CD4-positive, alpha-beta memory T cell (primary cell): ENCODE measurements at regions of chr12 and their contacts with region 1.

Region 1: DNA sequence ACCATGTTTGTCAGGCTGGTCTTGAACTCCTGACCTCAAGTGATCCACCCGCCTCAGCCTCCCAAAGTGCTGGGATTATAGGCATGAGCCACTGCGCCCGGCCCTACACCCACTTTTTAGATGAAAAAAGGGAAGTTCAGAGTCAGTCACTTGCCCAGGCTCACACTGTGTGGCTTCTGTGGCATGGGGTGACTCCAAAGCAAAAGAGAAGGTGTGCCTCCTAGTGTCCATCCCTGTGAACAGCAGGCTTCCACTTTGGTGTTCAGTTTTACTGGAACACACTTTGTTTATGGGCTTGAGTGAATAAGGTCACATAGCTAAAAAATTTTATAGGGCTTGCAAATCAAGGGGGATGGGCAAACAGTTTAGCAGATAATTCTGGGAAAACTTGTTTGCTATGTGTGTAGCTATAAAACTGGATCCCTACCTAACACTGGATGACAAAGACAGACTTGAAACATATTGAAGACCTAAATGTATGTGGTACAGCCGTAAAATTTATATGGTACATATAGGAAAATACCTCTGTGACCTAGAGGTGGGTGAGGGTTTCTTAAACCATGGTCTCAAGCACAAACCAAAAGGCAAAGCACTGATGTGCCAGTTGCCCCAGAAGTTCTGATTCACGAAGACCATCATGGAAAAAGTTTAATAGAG is 54.9 kb downstream of the EID3 start:
- DNase-seq: peak; percentile 65 to 69 (median 68)
- H3K4me3 ChIP-seq: no peak overlapping the region
- H3K4me3 Mint-ChIP-seq: no peak overlapping the region
- H3K27ac ChIP-seq: no peak overlapping the region
- H3K27ac Mint-ChIP-seq: no peak overlapping the region
- H3K4me1 ChIP-seq: no peaks in the 10 kb centered on the region
- H3K4me1 Mint-ChIP-seq: peaks cover 0 to 5% (median 2%) of the 10 kb centered on the region in 4 donors
- H3K27me3 ChIP-seq: no peaks in the 10 kb centered on the region
- H3K27me3 Mint-ChIP-seq: no peaks in the 10 kb centered on the region

Region 2: DNA sequence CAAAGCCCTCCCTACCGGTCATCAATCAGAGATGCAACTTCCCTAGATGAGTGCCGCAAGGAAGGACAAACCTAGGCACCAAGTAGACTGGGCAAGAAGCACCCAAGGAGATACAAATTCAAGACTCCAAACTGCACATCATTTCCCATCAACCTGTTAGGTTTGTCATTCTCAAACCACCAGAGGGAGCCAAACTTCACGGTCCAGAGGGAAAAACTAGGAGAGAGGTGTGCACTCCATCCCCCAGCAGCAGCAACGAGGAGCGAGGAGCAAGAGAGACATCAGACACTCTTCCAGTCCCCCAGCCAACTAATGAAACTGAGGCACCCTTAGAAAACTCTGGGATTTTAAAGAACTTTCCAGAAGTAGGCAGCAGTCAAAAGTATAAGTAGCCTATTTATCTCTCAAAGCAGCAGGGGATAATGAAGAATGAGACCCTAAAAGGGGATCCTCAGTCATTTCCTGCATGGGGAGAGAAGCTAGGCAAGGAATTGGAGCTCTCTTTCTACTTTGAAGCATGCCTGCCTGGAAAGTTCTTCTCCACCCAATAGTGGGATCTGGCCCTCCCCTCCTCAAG is 480.5 kb before region 1 on chr12:
- CTCF ChIA-PET with region 1: no interaction called
- POLR2A ChIA-PET with region 1: no interaction called
- intact Hi-C with region 1: loop called (anchors 10 kb)
- DNase-seq: peak; percentile 51 to 61 (median 60)
- H3K4me3 ChIP-seq: no peak overlapping the region
- H3K4me3 Mint-ChIP-seq: peak overlapping the region in 3 of 8 donors; percentile 8 to 62 (median 20)
- H3K27ac ChIP-seq: no peak overlapping the region
- H3K27ac Mint-ChIP-seq: peak overlapping the region in 3 of 7 donors; percentile 23 to 77 (median 76)
- H3K4me1 ChIP-seq: peaks cover 7% of the 10 kb centered on the region
- H3K4me1 Mint-ChIP-seq: peaks cover 3 to 27% (median 14%) of the 10 kb centered on the region in 4 donors
- H3K27me3 ChIP-seq: no peaks in the 10 kb centered on the region
- H3K27me3 Mint-ChIP-seq: no peaks in the 10 kb centered on the region

Region 3: DNA sequence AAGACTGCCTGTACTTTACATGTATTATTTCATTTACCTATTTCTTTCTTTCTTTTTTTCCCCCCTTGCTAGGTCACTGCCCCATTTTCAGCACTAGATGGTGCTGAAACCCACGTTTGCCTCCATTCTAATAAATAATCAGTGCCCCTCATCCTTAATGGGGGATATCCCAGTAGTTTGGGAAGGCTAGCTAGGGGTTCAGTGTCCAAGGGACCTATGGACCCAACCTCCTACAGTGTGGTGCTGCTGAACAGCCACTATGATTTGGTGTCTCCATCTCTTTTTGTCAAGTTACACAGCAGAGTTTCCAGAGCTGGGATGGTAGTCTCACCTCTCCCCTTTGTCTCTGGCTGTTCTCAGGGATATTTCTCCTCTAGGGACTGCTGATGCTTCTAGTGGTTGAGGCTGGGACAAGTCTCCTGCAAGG is 300.7 kb before region 1 on chr12:
- CTCF ChIA-PET with region 1: no interaction called
- POLR2A ChIA-PET with region 1: no interaction called
- intact Hi-C with region 1: loop called (anchors 10 kb)
- DNase-seq: peak in 4 of 5 donors; percentile 7 to 28 (median 22)
- H3K4me3 ChIP-seq: no peak overlapping the region
- H3K4me3 Mint-ChIP-seq: no peak overlapping the region
- H3K27ac ChIP-seq: no peak overlapping the region
- H3K27ac Mint-ChIP-seq: peak overlapping the region in 1 of 7 donors; percentile 27
- H3K4me1 ChIP-seq: no peaks in the 10 kb centered on the region
- H3K4me1 Mint-ChIP-seq: no peaks in the 10 kb centered on the region
- H3K27me3 ChIP-seq: peaks cover 9% of the 10 kb centered on the region
- H3K27me3 Mint-ChIP-seq: peaks cover 9 to 23% of the 10 kb centered on the region in 2 donors

Region 4: DNA sequence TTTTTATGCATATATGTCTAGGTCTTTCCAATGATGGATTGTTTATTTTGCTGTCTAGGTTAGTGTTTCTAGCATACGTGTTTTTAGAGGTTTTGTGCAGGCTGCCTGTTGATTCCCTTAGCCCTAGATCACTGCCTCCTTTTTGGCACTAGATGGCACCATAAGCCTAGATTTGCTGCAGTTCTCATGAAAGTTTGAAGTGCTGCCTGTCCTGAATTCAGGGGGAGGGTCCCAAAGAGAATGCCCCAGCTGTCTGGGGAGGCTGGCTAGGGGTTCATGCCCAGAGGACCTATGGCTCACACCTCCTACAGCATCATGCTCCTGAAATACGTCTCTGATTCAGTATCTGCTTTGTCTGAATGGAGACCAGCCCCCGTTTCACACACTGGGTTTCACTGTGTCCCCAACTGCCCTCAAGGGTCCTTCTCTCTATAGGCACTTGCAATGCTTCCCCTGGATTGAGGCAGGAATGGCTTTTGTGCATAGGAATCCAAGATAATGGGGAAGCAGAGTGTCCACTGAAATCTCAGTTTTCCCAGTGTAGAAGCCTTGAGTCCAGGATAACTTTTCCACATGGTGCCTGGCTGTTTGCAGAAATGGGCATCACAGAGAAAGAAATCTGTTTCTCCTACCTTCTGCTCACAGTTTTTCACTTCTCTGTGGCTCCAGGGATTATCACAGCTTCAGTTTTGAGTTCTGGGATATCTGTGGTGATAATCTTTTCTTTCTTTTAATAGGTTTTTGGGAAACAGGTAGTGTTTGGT is 157.1 kb before region 1 on chr12:
- CTCF ChIA-PET with region 1: interaction called, 107 read pairs
- POLR2A ChIA-PET with region 1: interaction called, 5 read pairs
- intact Hi-C with region 1: loop called (anchors 1 kb)
- DNase-seq: peak; percentile 59 to 69 (median 65)
- H3K4me3 ChIP-seq: no peak overlapping the region
- H3K4me3 Mint-ChIP-seq: peak overlapping the region in 2 of 8 donors; percentile 3 to 22
- H3K27ac ChIP-seq: no peak overlapping the region
- H3K27ac Mint-ChIP-seq: no peak overlapping the region
- H3K4me1 ChIP-seq: no peaks in the 10 kb centered on the region
- H3K4me1 Mint-ChIP-seq: peaks cover 2 to 4% (median 3%) of the 10 kb centered on the region in 4 donors
- H3K27me3 ChIP-seq: no peaks in the 10 kb centered on the region
- H3K27me3 Mint-ChIP-seq: peaks cover 7 to 8% of the 10 kb centered on the region in 2 donors

Region 5: GRCh38 chr12:104215638-104216297 is 142.7 kb before region 1 on chr12 and contains the start of gene TXNRD1:
- CTCF ChIA-PET with region 1: interaction called, 74 read pairs
- POLR2A ChIA-PET with region 1: interaction called, 3 read pairs
- intact Hi-C with region 1: loop called (anchors 1 kb)
- DNase-seq: peak; percentile 78 to 84 (median 82)
- H3K4me3 ChIP-seq: peak within 1 kb of the TSS in 1 of 2 donors; percentile 62
- H3K4me3 Mint-ChIP-seq: peak within 1 kb of the TSS; percentile 73 to 92 (median 86)
- H3K27ac ChIP-seq: peak within 1 kb of the TSS; percentile 57
- H3K27ac Mint-ChIP-seq: peak within 1 kb of the TSS; percentile 2 to 93 (median 84)
- H3K4me1 ChIP-seq: peaks cover 29% of the 10 kb centered on the region
- H3K4me1 Mint-ChIP-seq: peaks cover 18 to 38% (median 27%) of the 10 kb centered on the region in 4 donors
- H3K27me3 ChIP-seq: no peaks in the 10 kb centered on the region
- H3K27me3 Mint-ChIP-seq: no peaks in the 10 kb centered on the region
- total RNA-seq, gene TXNRD1: 57.6 to 64.5 TPM

Region 6: GRCh38 chr12:104286538-104287482 is 71.7 kb before region 1 on chr12:
- CTCF ChIA-PET with region 1: interaction called, 20 read pairs
- POLR2A ChIA-PET with region 1: no interaction called
- intact Hi-C with region 1: loop called (anchors 1 kb)
- DNase-seq: peak; percentile 87 to 94 (median 88)
- H3K4me3 ChIP-seq: peak overlapping the region; percentile 80 to 96
- H3K4me3 Mint-ChIP-seq: peak overlapping the region; percentile 94 to 100 (median 99)
- H3K27ac ChIP-seq: peak overlapping the region; percentile 82
- H3K27ac Mint-ChIP-seq: peak overlapping the region; percentile 94 to 99 (median 96)
- H3K4me1 ChIP-seq: peaks cover 35% of the 10 kb centered on the region
- H3K4me1 Mint-ChIP-seq: peaks cover 23 to 41% (median 30%) of the 10 kb centered on the region in 4 donors
- H3K27me3 ChIP-seq: no peaks in the 10 kb centered on the region
- H3K27me3 Mint-ChIP-seq: peaks cover 0 to 2% of the 10 kb centered on the region in 2 donors

Region 7: DNA sequence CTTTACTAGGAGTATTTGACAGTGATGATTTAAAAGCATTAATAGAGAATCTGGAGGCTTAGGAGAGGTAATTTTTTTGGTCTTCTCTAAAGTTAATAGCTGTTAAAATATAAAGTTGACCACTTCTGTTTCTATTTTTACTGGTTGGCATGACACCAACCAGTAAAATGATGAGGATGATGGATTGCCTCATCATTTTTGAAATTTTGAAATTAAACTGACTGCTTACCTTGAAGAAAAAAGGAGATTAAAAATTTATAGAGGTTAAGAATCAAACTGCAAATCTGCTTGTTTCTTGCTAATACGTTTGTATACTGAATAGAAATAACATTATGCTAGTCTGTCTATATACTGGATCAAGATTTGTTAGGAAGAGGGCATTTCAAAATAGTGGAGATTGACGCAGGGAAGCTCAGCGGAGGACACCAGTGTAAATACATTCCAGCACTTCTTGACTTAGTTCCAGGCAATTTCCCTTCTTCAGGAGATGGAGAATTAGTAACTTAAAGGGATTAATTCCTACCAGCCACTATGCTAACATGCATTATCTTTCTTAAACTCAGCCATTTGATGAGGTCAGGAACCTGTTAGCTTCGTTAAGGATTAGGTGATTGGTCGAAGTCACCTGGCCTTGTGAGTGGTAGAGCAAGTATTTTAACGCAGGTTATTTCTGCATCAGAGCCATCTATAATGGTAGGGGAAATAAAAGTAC is 51.4 kb before region 1 on chr12:
- CTCF ChIA-PET with region 1: no interaction called
- POLR2A ChIA-PET with region 1: no interaction called
- intact Hi-C with region 1: no loop called
- DNase-seq: no peak
- H3K4me3 ChIP-seq: no peak overlapping the region
- H3K4me3 Mint-ChIP-seq: no peak overlapping the region
- H3K27ac ChIP-seq: no peak overlapping the region
- H3K27ac Mint-ChIP-seq: peak overlapping the region in 2 of 7 donors; percentile 16 to 29
- H3K4me1 ChIP-seq: peaks cover 41% of the 10 kb centered on the region
- H3K4me1 Mint-ChIP-seq: peaks cover 40 to 66% (median 52%) of the 10 kb centered on the region in 4 donors
- H3K27me3 ChIP-seq: no peaks in the 10 kb centered on the region
- H3K27me3 Mint-ChIP-seq: no peaks in the 10 kb centered on the region